MCF 10A (cell line): ENCODE measurements at regions of chr2 and their contacts with region 1.

Region 1: GRCh38 chr2:135004005-135004746 is 43.1 kb downstream of the MAP3K19 start:
- DNase-seq: peak; percentile 73
- H3K4me3 Mint-ChIP-seq: no peak overlapping the region
- H3K27ac Mint-ChIP-seq: no peak overlapping the region
- H3K4me1 Mint-ChIP-seq: peaks cover 9% of the 10 kb centered on the region
- H3K27me3 Mint-ChIP-seq: peaks cover 25% of the 10 kb centered on the region
- CTCF ChIP-seq: peak; percentile 94

Region 2: DNA sequence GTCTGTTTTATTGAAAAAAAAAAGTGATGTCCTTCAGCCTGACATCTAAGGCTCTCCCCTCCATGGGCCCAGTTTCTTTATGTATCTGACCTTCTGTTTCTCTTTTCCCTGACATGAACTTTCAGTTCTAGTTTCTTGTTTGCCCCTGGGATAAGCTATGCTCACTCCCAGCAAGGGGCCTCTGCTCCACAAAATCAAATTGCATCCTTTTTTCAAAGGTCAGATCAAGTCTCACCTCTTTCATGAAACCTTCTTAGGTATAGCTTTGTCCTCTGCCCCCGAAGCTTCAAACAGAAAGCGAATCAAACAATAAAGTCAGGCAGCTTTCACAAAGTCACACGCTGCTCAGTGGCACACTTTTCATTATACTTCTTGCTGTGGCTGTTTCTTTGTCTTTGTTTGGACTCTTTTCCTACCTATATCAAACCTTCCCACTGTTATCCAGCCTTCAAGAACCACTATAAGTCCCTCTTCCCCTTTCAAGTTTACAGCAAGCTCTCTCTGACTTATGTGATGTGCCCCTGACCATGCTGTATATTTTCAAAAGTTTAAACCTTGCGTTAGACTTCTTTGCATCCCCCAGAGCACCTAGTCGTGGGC is 19.8 kb after region 1 on chr2:
- CTCF ChIA-PET with region 1: interaction called, 14 read pairs
- POLR2A ChIA-PET with region 1: no interaction called
- intact Hi-C with region 1: no loop called
- DNase-seq: no peak
- H3K4me3 Mint-ChIP-seq: no peak overlapping the region
- H3K27ac Mint-ChIP-seq: no peak overlapping the region
- H3K4me1 Mint-ChIP-seq: no peaks in the 10 kb centered on the region
- H3K27me3 Mint-ChIP-seq: peaks cover 11% of the 10 kb centered on the region
- CTCF ChIP-seq: no peak

Region 3: DNA sequence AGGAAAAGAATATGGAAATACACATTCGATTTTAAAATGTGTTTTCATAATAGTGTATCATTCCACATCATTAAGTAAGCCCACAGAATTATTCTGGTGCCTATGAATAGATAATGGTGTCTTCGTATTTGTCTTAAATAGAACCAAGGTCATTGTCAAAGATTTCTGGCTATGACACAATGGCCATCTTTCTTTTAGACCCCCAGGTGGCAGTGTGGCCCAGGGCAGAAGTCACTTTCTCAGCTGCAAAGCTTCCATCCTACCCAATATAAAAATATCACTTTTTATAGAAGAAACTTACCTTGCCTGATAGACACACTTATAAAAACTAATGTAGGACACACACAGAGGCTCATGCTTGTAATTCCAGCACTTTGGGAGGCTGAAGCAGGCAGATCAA is 469.4 kb after region 1 on chr2:
- CTCF ChIA-PET with region 1: no interaction called
- POLR2A ChIA-PET with region 1: no interaction called
- intact Hi-C with region 1: loop called (anchors 10 kb)
- DNase-seq: peak; percentile 40
- H3K4me3 Mint-ChIP-seq: no peak overlapping the region
- H3K27ac Mint-ChIP-seq: no peak overlapping the region
- H3K4me1 Mint-ChIP-seq: no peaks in the 10 kb centered on the region
- H3K27me3 Mint-ChIP-seq: no peaks in the 10 kb centered on the region
- CTCF ChIP-seq: peak; percentile 35

Region 4: GRCh38 chr2:135600915-135601314 is 596.7 kb after region 1 on chr2:
- CTCF ChIA-PET with region 1: interaction called, 8 read pairs
- POLR2A ChIA-PET with region 1: interaction called, 4 read pairs
- intact Hi-C with region 1: loop called (anchors 5 kb)
- DNase-seq: peak; percentile 5
- H3K4me3 Mint-ChIP-seq: no peak overlapping the region
- H3K27ac Mint-ChIP-seq: peak overlapping the region; percentile 29
- H3K4me1 Mint-ChIP-seq: no peaks in the 10 kb centered on the region
- H3K27me3 Mint-ChIP-seq: no peaks in the 10 kb centered on the region
- CTCF ChIP-seq: no peak

Region 5: DNA sequence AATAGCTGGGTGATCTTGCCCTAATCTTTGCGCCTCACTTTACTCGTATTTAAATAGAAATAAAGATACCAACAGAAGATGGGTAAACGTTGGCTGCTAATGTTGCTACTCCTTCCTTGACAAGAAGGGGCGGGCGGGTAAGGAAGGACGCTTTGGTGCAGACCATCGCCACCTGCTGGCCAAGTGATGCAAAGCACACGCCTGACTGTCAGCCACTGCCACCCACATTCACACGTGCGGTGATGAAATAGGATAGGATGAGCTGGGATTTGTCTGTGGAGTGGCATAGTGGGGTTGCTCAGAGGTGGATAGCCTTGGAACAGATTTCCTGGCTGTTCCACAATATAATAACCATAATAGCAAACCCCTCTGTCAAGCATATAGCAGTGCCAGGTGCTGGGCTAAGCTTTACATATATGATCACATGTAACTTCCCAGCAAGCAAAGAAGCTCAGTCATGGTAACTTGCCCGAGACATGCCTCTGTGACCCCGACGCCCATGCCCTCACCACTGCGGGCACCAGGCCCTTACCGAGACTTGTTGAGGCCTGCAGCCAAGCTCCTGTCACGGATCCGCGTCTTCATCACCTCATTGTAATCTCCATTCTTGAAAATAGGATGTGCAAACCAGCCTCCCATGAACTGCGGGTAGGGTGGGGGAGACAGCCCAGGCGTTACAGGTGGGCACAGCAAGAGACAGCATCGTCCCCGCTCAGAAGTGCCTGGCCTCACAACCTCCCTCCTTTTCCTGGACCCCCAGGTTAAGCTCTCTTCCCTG is 793.5 kb after region 1 on chr2:
- CTCF ChIA-PET with region 1: interaction called, 13 read pairs
- POLR2A ChIA-PET with region 1: no interaction called
- intact Hi-C with region 1: loop called (anchors 2 kb)
- DNase-seq: peak; percentile 81
- H3K4me3 Mint-ChIP-seq: no peak overlapping the region
- H3K27ac Mint-ChIP-seq: no peak overlapping the region
- H3K4me1 Mint-ChIP-seq: peaks cover 9% of the 10 kb centered on the region
- H3K27me3 Mint-ChIP-seq: no peaks in the 10 kb centered on the region
- CTCF ChIP-seq: peak; percentile 85